Mammary epithelial cell (primary cell): ENCODE measurements at regions of chr19 and their contacts with region 1.

Region 1: DNA sequence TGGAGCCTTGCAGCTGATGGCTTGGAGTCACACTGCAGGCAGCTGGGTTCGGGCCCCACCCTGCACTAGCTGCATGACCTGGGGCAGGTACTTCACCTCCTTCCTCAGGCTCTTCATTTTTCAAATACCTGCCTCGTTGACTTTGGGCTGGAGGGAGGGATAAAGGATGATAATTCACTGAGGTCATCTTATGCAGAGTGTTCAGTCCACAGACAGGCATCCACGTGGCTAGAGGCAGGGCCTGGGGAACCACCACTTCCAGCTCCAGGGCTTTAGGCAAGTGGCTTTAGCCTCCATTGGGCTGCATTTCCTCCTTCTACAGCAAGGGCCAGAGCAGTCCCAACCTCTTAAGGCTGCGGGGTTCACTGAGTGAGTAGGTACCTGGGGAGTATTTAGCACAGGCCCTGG is 84.8 kb downstream of the SIPA1L3 start:
- DNase-seq: peak; percentile 57
- H3K4me3 ChIP-seq: no peak overlapping the region
- H3K27ac ChIP-seq: peak overlapping the region; percentile 47
- H3K4me1 ChIP-seq: peaks cover 27% of the 10 kb centered on the region
- H3K27me3 ChIP-seq: no peaks in the 10 kb centered on the region
- CTCF ChIP-seq: no peak

Region 2: GRCh38 chr19:37979547-37980082 is 12.2 kb before region 1 on chr19:
- CTCF ChIA-PET with region 1: interaction called, 11 read pairs
- dilution Hi-C with region 1: no loop called
- in situ Hi-C with region 1: no loop called
- intact Hi-C with region 1: no loop called
- DNase-seq: peak; percentile 98
- H3K4me3 ChIP-seq: no peak overlapping the region
- H3K27ac ChIP-seq: peak overlapping the region; percentile 95
- H3K4me1 ChIP-seq: peaks cover 67% of the 10 kb centered on the region
- H3K27me3 ChIP-seq: no peaks in the 10 kb centered on the region
- CTCF ChIP-seq: no peak